ENCODE measurements at regions of chr2 and their contacts with region 1.

Region 1: GRCh38 chr2:66888791-66889631 is 454.1 kb downstream of the MEIS1 start:
- DNase-seq: no peak
- H3K4me3 ChIP-seq: no peak overlapping the region
- H3K27ac ChIP-seq: no peak overlapping the region
- H3K4me1 ChIP-seq: no peaks in the 10 kb centered on the region
- H3K27me3 ChIP-seq: peaks cover 0 to 3% of the 10 kb centered on the region in 2 donors
- CTCF ChIP-seq: no peak

Region 2: DNA sequence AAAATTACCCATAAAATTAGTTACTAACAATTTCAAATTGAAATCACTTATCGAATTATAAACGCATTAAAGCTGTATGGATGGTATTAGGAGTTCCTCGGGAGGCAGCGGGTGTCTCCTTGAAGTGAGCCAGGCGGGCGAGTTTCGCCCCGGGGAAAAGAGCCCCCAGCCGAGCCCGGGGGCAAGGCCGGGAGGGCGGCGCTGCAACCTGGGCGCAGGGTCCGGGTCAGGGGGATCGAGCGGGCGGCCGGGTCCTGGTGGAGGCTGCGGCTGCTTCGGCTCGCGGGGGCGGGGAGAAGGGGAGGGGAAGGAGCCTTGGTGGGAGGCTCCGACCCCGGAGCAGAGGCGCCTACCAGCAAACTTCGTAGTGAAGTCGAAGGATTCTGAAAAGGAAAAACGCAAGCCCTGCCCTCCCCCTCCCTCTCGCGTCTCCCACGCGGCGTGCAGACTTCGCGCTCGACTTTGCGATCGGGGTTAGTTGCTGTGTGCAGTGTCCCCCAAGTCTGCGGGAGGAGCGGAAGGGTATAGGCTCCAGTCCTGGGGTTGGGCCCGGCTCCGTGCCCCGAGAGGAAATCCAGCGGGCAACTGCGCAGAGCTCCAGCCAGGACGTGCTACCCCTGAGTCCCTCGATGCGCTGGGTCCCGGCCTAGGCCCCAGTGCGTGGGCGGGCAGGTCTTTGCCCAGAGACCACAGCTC is 313.2 kb before region 1 on chr2:
- intact Hi-C with region 1: no loop called
- DNase-seq: no peak
- H3K4me3 ChIP-seq: peak overlapping the region; percentile 55 to 75
- H3K27ac ChIP-seq: peak overlapping the region; percentile 50 to 55
- H3K4me1 ChIP-seq: peaks cover 0 to 32% (median 26%) of the 10 kb centered on the region in 4 donors
- H3K27me3 ChIP-seq: peaks cover 5 to 52% of the 10 kb centered on the region in 2 donors
- CTCF ChIP-seq: no peak

Region 3: GRCh38 chr2:66594001-66594400 is 295.0 kb before region 1 on chr2:
- intact Hi-C with region 1: loop called (anchors 5 kb)
- DNase-seq: no peak
- H3K4me3 ChIP-seq: no peak overlapping the region
- H3K27ac ChIP-seq: no peak overlapping the region
- H3K4me1 ChIP-seq: peaks cover 0 to 11% (median 0%) of the 10 kb centered on the region in 4 donors
- H3K27me3 ChIP-seq: no peaks in the 10 kb centered on the region
- CTCF ChIP-seq: no peak

Measured in tibial artery (tissue), 4 donors.